Activated T-helper 2 cell treated with anti-CD3 and anti-CD28 coated beads, Interferon-gamma antibody, Interleukin-2, Interleukin-4, amounts not matched to agents 10 μg/mL and 5 μg/mL and 100 μg/mL, durations not matched to agents 14 hours and 24 hours and 36 hours (primary cell): ENCODE measurements at regions of chr12 and their contacts with region 1.

Region 1: DNA sequence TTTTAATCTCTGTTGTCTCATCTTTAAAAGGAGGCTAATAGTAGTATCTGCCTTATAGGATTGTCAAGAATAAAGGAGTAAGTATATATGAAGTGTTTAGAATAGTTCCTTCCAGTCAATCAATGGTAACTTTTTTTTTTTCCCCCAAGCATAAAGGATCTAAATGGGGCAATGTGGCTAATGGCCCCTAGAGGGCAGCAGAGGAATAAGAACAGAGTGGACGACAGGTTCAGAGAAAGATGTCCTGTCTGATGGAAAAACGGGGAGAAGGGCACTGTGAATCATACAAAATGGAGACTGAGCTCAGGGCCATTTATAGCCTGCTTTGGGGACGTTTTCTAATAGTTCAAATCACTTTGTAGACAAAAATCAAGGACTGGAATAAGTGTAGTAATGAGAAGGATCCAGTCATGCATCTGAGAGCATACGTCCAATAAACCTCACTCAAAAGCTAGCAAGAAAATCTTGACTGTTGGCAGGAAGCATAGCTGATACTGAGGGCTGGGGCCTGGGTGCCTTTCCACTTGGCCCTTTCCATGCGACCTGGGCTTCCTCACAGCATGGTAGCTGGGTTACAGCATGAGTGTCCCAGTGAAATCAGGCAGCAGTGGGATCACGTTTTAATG is 51.3 kb downstream of the IFNG-AS1 start:
- DNase-seq: peak; percentile 44
- H3K4me3 Mint-ChIP-seq: no peak overlapping the region
- H3K27ac Mint-ChIP-seq: no peak overlapping the region
- H3K4me1 Mint-ChIP-seq: peaks cover 32% of the 10 kb centered on the region
- H3K27me3 Mint-ChIP-seq: no peaks in the 10 kb centered on the region

Region 2: GRCh38 chr12:68001486-68002466 is 38.8 kb before region 1 on chr12:
- intact Hi-C with region 1: loop called (anchors 5 kb)
- DNase-seq: no peak
- H3K4me3 Mint-ChIP-seq: no peak overlapping the region
- H3K27ac Mint-ChIP-seq: no peak overlapping the region
- H3K4me1 Mint-ChIP-seq: peaks cover 4% of the 10 kb centered on the region
- H3K27me3 Mint-ChIP-seq: peaks cover 1% of the 10 kb centered on the region

Region 3: DNA sequence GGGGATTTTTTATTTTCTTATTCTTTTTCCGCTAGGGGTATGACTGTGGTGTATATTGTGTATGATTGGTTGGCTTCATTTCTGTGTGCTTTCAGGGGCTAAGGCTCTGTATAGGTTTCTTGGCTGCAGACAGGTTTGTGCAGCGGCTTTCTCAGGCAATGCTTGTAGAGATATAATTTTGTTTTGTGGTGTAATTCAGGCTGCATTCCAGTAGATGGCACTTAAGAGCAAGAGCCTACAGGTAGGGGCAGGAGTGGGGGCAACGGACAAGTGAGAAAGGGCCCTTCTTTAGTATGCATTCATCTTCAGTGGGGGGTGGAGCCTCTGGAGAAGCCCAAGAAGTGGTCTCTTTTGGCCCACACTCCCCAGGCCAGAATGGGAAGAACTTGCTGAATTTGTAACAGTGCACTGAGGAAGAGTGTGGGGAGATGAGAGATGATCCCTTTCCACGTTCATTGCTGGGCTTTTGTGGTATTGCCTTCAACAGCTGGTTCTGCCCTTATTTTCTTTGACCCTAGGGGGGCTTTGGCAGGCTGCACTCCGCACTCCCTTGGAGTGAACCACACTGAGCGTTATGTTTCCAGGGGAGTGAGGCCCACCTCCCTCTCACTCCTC is 27.3 kb after region 1 on chr12:
- intact Hi-C with region 1: no loop called
- DNase-seq: no peak
- H3K4me3 Mint-ChIP-seq: no peak overlapping the region
- H3K27ac Mint-ChIP-seq: no peak overlapping the region
- H3K4me1 Mint-ChIP-seq: no peaks in the 10 kb centered on the region
- H3K27me3 Mint-ChIP-seq: no peaks in the 10 kb centered on the region

Region 4: GRCh38 chr12:68158432-68158831 is 117.9 kb after region 1 on chr12:
- intact Hi-C with region 1: loop called (anchors 1 kb)
- DNase-seq: no peak
- H3K4me3 Mint-ChIP-seq: peak overlapping the region; percentile 13
- H3K27ac Mint-ChIP-seq: no peak overlapping the region
- H3K4me1 Mint-ChIP-seq: peaks cover 35% of the 10 kb centered on the region
- H3K27me3 Mint-ChIP-seq: no peaks in the 10 kb centered on the region

Region 5: GRCh38 chr12:68175557-68176061 is 135.0 kb after region 1 on chr12:
- intact Hi-C with region 1: loop called (anchors 5 kb)
- DNase-seq: peak; percentile 34
- H3K4me3 Mint-ChIP-seq: peak overlapping the region; percentile 13
- H3K27ac Mint-ChIP-seq: no peak overlapping the region
- H3K4me1 Mint-ChIP-seq: peaks cover 39% of the 10 kb centered on the region
- H3K27me3 Mint-ChIP-seq: peaks cover 6% of the 10 kb centered on the region

Region 6: GRCh38 chr12:68200854-68201253 is 160.3 kb after region 1 on chr12:
- intact Hi-C with region 1: loop called (anchors 5 kb)
- DNase-seq: no peak
- H3K4me3 Mint-ChIP-seq: no peak overlapping the region
- H3K27ac Mint-ChIP-seq: no peak overlapping the region
- H3K4me1 Mint-ChIP-seq: peaks cover 42% of the 10 kb centered on the region
- H3K27me3 Mint-ChIP-seq: peaks cover 44% of the 10 kb centered on the region

Region 7: GRCh38 chr12:68223083-68223747 is 182.7 kb after region 1 on chr12:
- intact Hi-C with region 1: loop called (anchors 5 kb)
- DNase-seq: peak; percentile 59
- H3K4me3 Mint-ChIP-seq: no peak overlapping the region
- H3K27ac Mint-ChIP-seq: no peak overlapping the region
- H3K4me1 Mint-ChIP-seq: peaks cover 25% of the 10 kb centered on the region
- H3K27me3 Mint-ChIP-seq: peaks cover 44% of the 10 kb centered on the region

Region 8: DNA sequence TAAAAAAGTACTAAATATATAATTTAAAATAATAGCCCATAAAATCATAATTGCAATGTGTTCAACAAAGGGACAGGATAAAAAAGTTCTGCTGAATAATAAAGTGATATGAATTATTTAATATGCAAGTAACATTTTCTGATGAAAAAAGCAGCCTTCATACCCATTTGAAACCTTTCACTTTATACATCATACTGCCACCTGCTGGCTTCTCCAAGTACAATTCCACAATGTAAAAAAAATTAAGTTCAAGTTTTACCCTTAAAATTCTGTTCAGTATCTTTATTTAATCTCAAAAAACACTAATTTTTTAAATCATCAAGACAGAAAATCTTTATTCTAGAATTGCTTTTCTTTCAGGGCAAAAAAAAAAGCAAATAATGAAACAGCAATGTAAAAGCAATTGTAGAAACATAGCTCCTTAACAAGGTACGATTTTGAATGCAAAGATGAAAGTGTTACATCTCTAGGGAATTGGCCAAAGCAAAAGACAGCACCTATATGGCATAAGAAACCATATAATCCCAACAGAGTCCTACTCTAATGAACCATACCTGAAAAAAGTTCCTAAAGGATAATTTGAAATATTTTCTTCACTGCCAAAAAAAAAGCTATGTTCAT is 276.6 kb after region 1 on chr12:
- intact Hi-C with region 1: loop called (anchors 1 kb)
- DNase-seq: no peak
- H3K4me3 Mint-ChIP-seq: no peak overlapping the region
- H3K27ac Mint-ChIP-seq: no peak overlapping the region
- H3K4me1 Mint-ChIP-seq: peaks cover 3% of the 10 kb centered on the region
- H3K27me3 Mint-ChIP-seq: no peaks in the 10 kb centered on the region

Region 9: DNA sequence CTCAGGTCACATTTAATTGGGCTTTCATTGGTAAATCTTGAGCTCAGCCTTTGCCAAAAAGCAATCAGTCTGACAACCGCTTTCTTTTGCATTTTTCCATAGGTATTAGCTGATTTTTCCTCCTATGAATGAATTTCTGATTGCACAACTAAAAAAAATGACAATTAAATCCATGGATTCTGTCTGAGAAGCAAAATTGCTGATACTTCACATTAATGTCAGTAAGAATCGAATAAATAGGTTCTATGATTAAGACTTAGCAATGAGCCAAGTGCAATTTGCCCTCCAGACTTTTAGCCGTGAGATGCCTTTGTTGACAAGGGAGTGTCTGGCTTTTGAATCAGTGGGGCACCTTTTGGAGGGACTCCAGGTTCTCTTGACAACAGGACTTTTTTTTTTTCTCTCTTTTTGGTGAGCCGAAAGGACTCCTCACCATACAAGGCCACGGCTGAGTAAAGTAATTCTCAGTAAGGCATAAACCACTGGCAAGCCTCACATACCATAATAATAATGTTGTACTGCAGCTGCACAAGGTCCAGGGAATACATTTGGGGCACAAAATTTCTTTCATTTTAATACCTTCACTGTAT is 296.3 kb after region 1 on chr12:
- intact Hi-C with region 1: no loop called
- DNase-seq: no peak
- H3K4me3 Mint-ChIP-seq: no peak overlapping the region
- H3K27ac Mint-ChIP-seq: no peak overlapping the region
- H3K4me1 Mint-ChIP-seq: peaks cover 20% of the 10 kb centered on the region
- H3K27me3 Mint-ChIP-seq: peaks cover 19% of the 10 kb centered on the region